OCI-LY7 (cell line): ENCODE measurements at regions of chr3 and their contacts with region 1.

Region 1: DNA sequence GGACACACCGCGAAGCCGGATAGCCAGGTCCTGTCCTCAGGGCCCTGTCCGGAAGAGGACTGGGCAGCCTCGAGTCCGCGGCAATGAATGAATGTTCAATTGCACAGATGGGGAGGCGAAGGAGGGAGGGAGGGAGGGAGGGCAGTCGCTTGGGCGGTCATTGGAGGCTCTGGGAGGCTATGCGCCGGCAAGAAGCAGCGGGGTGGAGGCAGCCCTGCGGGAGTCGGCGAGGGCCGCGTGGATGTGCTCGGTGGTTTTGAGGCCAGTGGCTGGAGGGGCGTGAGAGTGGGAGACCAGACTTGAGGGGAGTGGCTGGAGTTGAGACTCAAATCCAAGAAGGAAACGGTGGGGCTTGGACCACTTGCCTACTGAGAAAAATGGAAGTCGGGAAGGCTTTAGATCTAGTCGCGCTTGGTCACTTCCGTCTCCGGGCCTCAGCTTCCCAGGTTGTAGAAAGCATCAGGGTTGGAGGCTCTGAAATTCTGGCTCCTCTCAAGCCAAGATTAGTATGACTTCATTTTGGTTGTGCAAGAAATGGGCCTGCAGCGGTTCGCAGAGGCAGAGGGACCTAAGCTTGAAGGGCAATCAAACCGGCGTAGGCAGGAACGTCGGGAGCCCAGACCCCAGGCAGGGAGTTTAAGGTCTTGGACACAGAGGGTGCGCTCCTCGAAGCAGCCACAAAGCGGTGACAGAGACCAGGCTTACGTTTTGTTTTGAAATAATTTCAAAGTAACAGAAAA is 21.1 kb upstream of the PLXND1 start:
- DNase-seq: peak; percentile 69
- H3K4me3 ChIP-seq: no peak overlapping the region
- H3K27ac ChIP-seq: no peak overlapping the region
- H3K4me1 ChIP-seq: peaks cover 13% of the 10 kb centered on the region
- CTCF ChIP-seq: peak; percentile 88

Region 2: GRCh38 chr3:129383292-129383860 is 244.2 kb before region 1 on chr3:
- CTCF ChIA-PET with region 1: no interaction called
- POLR2A ChIA-PET with region 1: no interaction called
- intact Hi-C with region 1: loop called (anchors 10 kb)
- DNase-seq: peak; percentile 82
- H3K4me3 ChIP-seq: no peak overlapping the region
- H3K27ac ChIP-seq: no peak overlapping the region
- H3K4me1 ChIP-seq: no peaks in the 10 kb centered on the region
- CTCF ChIP-seq: peak; percentile 93

Region 3: DNA sequence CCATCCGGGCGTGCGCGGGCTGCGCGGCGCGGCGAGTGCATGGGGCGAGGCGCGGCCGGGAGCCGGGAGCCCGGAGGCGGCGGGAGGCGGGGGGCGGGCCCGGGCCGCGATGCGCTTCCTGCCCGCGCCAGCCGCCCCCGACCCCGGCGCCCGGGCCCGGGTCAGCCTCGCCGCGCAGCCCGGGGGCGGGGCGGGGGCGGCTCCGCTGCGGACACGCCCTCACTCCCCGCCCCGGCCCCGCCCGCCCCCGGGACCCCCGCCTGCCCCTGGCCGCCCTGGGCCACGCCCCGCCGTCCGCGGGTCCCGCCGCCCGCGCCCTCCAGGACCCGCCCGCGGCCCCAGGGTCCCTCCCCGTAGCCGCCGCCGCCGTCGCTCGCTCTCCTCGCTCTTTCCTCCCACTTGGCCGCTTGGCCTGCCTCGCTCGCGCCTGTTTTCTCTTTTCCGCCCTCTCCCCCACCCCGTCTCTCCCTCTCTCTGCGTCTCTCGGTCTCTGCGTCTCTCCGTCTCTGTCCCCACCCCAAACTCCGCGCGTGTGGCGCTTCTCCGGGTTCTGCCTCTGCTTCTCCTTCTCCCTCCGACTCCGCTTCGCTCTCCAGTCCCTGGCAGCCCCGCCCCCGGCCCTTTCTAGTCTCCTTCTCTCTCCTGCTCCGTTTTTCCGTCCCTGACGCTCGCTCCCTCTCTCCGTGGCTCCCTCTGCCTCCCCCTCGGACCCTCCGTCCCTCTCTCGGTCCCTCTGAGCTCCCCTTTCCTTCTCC is 20.8 kb before region 1 on chr3 and contains the start of gene PLXND1:
- CTCF ChIA-PET with region 1: no interaction called
- POLR2A ChIA-PET with region 1: no interaction called
- intact Hi-C with region 1: no loop called
- DNase-seq: no peak
- H3K4me3 ChIP-seq: peak within 1 kb of the TSS; percentile 8
- H3K27ac ChIP-seq: no peak within 1 kb of the TSS
- H3K4me1 ChIP-seq: no peaks in the 10 kb centered on the region
- CTCF ChIP-seq: no peak
- total RNA-seq, gene PLXND1: 6.0 and 6.8 TPM in 2 replicates